Ovary (tissue), 10 donors: ENCODE measurements at regions of chr1 and their contacts with region 1.

Region 1: GRCh38 chr1:115865704-115866380 is 24.9 kb upstream of the NHLH2 start:
- DNase-seq: no peak
- H3K4me3 ChIP-seq: no peak overlapping the region
- H3K27ac ChIP-seq: no peak overlapping the region
- H3K4me1 ChIP-seq: no peaks in the 10 kb centered on the region
- H3K27me3 ChIP-seq: no peaks in the 10 kb centered on the region
- CTCF ChIP-seq: no peak
- EP300 ChIP-seq: no peak
- POLR2A ChIP-seq: no peak

Region 2: DNA sequence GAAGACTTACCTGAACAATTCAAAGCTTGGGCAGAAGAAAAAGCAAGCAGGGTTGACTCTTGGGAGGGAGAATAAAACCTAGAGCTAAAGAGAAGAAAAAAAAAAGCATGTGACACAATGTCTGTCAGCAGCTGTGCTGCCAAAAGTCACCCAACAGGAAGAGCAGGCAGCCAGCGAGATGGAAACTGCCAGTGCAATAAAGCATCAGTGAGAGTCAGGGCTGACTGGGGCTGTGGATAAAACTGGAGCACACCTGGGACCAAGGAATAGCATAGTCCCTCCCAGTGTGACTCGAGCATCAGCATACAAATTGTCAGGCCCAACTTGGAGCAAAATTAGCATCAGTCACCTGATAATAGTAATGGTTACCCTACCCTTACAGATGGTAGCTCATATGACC is 45.5 kb after region 1 on chr1:
- intact Hi-C with region 1: no loop called
- DNase-seq: no peak
- H3K4me3 ChIP-seq: no peak overlapping the region
- H3K27ac ChIP-seq: no peak overlapping the region
- H3K4me1 ChIP-seq: no peaks in the 10 kb centered on the region
- H3K27me3 ChIP-seq: no peaks in the 10 kb centered on the region
- CTCF ChIP-seq: no peak
- EP300 ChIP-seq: no peak
- POLR2A ChIP-seq: no peak

Region 3: GRCh38 chr1:115933625-115934024 is 67.8 kb after region 1 on chr1:
- intact Hi-C with region 1: loop called in 1 of 4 experiments (anchors 1 kb)
- DNase-seq: no peak
- H3K4me3 ChIP-seq: no peak overlapping the region
- H3K27ac ChIP-seq: no peak overlapping the region
- H3K4me1 ChIP-seq: no peaks in the 10 kb centered on the region
- H3K27me3 ChIP-seq: no peaks in the 10 kb centered on the region
- CTCF ChIP-seq: no peak
- EP300 ChIP-seq: no peak
- POLR2A ChIP-seq: no peak